CD8-positive, alpha-beta T cell (primary cell): ENCODE measurements at regions of chr1 and their contacts with region 1.

Region 1: DNA sequence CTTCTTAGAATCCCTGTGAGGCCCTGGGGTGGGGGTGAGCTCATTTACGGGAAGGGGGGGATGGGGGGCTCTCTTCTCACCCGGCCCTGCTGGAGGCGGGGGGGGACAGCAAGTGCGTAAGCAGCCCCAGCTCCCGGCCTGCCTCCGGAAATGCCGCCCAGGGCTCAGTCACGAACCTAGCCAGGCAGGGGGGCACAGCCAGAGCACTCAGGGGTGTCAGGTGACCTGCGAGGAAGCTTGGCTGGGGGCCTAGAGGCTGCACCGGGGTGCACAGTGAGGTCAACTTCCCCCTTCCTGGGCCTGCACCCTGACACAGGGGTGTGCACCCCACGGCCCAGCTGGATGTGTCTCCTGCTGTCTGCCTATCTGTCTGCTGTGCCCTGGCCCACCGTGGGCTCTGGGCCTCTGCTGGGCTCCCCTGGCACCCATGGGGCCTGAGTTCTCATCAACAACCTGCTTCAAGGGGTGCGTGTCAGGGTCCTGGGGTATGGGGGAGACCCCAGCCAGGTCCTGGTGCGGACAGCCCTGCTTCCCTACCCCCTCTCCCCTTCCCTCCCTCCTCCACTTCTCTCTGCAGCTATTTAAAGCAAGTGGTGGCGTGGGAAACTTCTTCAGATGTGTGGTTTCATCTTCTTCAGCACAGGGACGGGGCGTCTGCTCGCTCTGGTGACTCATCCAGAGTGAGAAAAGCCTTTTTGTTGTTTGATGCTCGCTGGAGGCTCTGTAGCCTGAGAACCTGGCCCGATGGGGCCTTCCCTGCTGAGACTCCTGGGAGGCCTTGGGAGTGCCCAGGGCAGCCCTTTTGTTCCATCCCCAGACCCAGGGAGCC is 92.5 kb upstream of the RUNX3 start:
- DNase-seq: peak; percentile 91 to 100 (median 95)
- ATAC-seq: peak; percentile 83
- H3K4me3 ChIP-seq: peak overlapping the region; percentile 43 to 45
- H3K4me3 Mint-ChIP-seq: peak overlapping the region; percentile 58
- H3K27ac ChIP-seq: peak overlapping the region; percentile 83 to 100
- H3K27ac Mint-ChIP-seq: peak overlapping the region; percentile 93
- H3K4me1 ChIP-seq: peaks cover 90% of the 10 kb centered on the region
- H3K4me1 Mint-ChIP-seq: peaks cover 88% of the 10 kb centered on the region
- H3K27me3 ChIP-seq: no peaks in the 10 kb centered on the region
- H3K27me3 Mint-ChIP-seq: no peaks in the 10 kb centered on the region
- CTCF ChIP-seq: no peak

Region 2: GRCh38 chr1:24955161-24955560 is 67.4 kb before region 1 on chr1:
- CTCF ChIA-PET with region 1: no interaction called
- POLR2A ChIA-PET with region 1: interaction called, 4 read pairs
- intact Hi-C with region 1: loop called in 1 of 2 experiments (anchors 2 kb)
- DNase-seq: peak in 8 of 9 experiments; percentile 56 to 88 (median 72)
- ATAC-seq: peak; percentile 82
- H3K4me3 ChIP-seq: peak overlapping the region in 1 of 2 experiments; percentile 2
- H3K4me3 Mint-ChIP-seq: peak overlapping the region; percentile 37
- H3K27ac ChIP-seq: peak overlapping the region in 1 of 2 experiments; percentile 23
- H3K27ac Mint-ChIP-seq: peak overlapping the region; percentile 93
- H3K4me1 ChIP-seq: peaks cover 76% of the 10 kb centered on the region
- H3K4me1 Mint-ChIP-seq: peaks cover 83% of the 10 kb centered on the region
- H3K27me3 ChIP-seq: no peaks in the 10 kb centered on the region
- H3K27me3 Mint-ChIP-seq: no peaks in the 10 kb centered on the region
- CTCF ChIP-seq: no peak

Region 3: DNA sequence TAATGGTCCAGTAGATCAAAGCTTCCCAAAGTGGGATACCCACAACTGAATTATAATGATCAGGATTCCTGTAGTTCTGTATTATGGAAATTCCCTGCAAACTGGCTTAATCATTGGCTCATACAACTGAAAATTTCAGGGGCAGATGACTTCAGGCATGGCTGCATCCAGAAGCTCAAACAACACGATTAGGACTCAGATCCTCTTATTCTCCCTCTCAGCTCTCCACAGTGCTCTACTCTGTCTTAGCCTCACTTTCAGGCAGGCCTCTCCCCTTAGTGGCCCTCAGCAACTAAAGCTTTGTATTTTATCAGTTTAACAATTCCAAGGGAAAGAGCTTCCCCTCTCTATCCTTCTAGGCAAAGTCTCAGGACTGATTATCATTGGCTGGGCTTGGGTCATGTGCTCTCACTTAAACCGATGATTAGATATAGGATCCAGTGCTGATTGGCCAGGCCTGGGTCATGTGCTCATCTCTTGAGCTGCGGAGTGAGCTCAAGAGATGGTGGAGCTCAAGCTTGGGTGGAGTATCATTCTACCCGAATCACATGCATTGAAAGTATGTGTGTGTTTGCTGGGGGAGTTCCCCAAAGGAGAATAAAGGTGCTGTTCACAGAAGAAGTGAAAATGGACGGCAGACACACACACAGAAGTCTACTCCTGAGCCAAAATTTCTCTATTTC is 34.6 kb before region 1 on chr1:
- CTCF ChIA-PET with region 1: interaction called, 6 read pairs
- POLR2A ChIA-PET with region 1: interaction called, 52 read pairs
- intact Hi-C with region 1: loop called in 1 of 2 experiments (anchors 2 kb)
- DNase-seq: peak in 2 of 9 experiments; percentile 33 to 71
- ATAC-seq: peak; percentile 45
- H3K4me3 ChIP-seq: no peak overlapping the region
- H3K4me3 Mint-ChIP-seq: peak overlapping the region; percentile 53
- H3K27ac ChIP-seq: no peak overlapping the region
- H3K27ac Mint-ChIP-seq: peak overlapping the region; percentile 83
- H3K4me1 ChIP-seq: peaks cover 100% of the 10 kb centered on the region
- H3K4me1 Mint-ChIP-seq: peaks cover 97% of the 10 kb centered on the region
- H3K27me3 ChIP-seq: no peaks in the 10 kb centered on the region
- H3K27me3 Mint-ChIP-seq: no peaks in the 10 kb centered on the region
- CTCF ChIP-seq: no peak

Region 4: GRCh38 chr1:24996983-24997893 is 25.3 kb before region 1 on chr1:
- CTCF ChIA-PET with region 1: interaction called, 4 read pairs
- POLR2A ChIA-PET with region 1: interaction called, 52 read pairs
- intact Hi-C with region 1: loop called in 1 of 2 experiments (anchors 1 kb)
- DNase-seq: peak in 8 of 9 experiments; percentile 34 to 86 (median 74)
- ATAC-seq: peak; percentile 65
- H3K4me3 ChIP-seq: peak overlapping the region in 1 of 2 experiments; percentile 1
- H3K4me3 Mint-ChIP-seq: peak overlapping the region; percentile 54
- H3K27ac ChIP-seq: peak overlapping the region; percentile 14 to 73
- H3K27ac Mint-ChIP-seq: peak overlapping the region; percentile 92
- H3K4me1 ChIP-seq: peaks cover 89% of the 10 kb centered on the region
- H3K4me1 Mint-ChIP-seq: peaks cover 92% of the 10 kb centered on the region
- H3K27me3 ChIP-seq: no peaks in the 10 kb centered on the region
- H3K27me3 Mint-ChIP-seq: no peaks in the 10 kb centered on the region
- CTCF ChIP-seq: no peak

Region 5: GRCh38 chr1:25006770-25007169 is 15.8 kb before region 1 on chr1:
- CTCF ChIA-PET with region 1: interaction called, 9 read pairs
- POLR2A ChIA-PET with region 1: interaction called, 15 read pairs
- intact Hi-C with region 1: no loop called
- DNase-seq: no peak
- ATAC-seq: no peak
- H3K4me3 ChIP-seq: no peak overlapping the region
- H3K4me3 Mint-ChIP-seq: no peak overlapping the region
- H3K27ac ChIP-seq: no peak overlapping the region
- H3K27ac Mint-ChIP-seq: no peak overlapping the region
- H3K4me1 ChIP-seq: peaks cover 67% of the 10 kb centered on the region
- H3K4me1 Mint-ChIP-seq: peaks cover 74% of the 10 kb centered on the region
- H3K27me3 ChIP-seq: no peaks in the 10 kb centered on the region
- H3K27me3 Mint-ChIP-seq: no peaks in the 10 kb centered on the region
- CTCF ChIP-seq: no peak

Region 6: GRCh38 chr1:25065795-25066238 is 43.2 kb after region 1 on chr1:
- CTCF ChIA-PET with region 1: no interaction called
- POLR2A ChIA-PET with region 1: interaction called, 4 read pairs
- intact Hi-C with region 1: loop called in 1 of 2 experiments (anchors 2 kb)
- DNase-seq: peak; percentile 35 to 94 (median 63)
- ATAC-seq: peak; percentile 74
- H3K4me3 ChIP-seq: peak overlapping the region; percentile 16 to 67
- H3K4me3 Mint-ChIP-seq: peak overlapping the region; percentile 78
- H3K27ac ChIP-seq: peak overlapping the region; percentile 57 to 79
- H3K27ac Mint-ChIP-seq: peak overlapping the region; percentile 92
- H3K4me1 ChIP-seq: peaks cover 25% of the 10 kb centered on the region
- H3K4me1 Mint-ChIP-seq: peaks cover 34% of the 10 kb centered on the region
- H3K27me3 ChIP-seq: no peaks in the 10 kb centered on the region
- H3K27me3 Mint-ChIP-seq: no peaks in the 10 kb centered on the region
- CTCF ChIP-seq: no peak